ENCODE measurements at regions of chr15 and their contacts with region 1.

Region 1: GRCh38 chr15:57440799-57441198 is 64.5 kb downstream of the CGNL1 start:
- DNase-seq: no peak
- ATAC-seq: no peak
- H3K4me3 ChIP-seq: no peak overlapping the region
- H3K27ac ChIP-seq: no peak overlapping the region
- H3K4me1 ChIP-seq: no peaks in the 10 kb centered on the region
- H3K27me3 ChIP-seq: no peaks in the 10 kb centered on the region; the same call in 1 of the 2 replicates
- CTCF ChIP-seq: no peak

Region 2: DNA sequence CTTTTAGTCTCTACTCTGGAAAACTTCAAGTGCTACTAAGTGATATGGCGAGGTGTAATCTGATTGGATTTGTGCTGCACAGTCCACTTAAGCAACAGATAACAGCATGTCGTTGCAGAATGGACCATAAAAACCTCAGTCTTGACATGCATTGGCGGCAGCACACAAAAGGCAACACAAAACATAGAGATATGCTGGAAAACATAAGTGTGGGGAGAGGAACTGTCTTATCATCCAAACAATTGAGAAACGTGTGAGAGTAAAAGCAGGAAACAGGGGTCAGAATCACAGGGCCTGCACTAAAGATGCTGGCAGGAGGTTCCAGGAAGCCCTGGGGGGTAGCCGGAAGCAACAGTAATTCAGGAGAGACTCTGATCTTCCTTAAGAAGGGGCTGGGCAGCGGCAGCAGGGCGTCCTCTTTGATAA is 17.6 kb after region 1 on chr15:
- CTCF ChIA-PET with region 1: no interaction called
- POLR2A ChIA-PET with region 1: interaction called, 16 read pairs
- in situ Hi-C with region 1: no loop called
- intact Hi-C with region 1: no loop called
- DNase-seq: no peak
- ATAC-seq: no peak
- H3K4me3 ChIP-seq: no peak overlapping the region
- H3K27ac ChIP-seq: no peak overlapping the region
- H3K4me1 ChIP-seq: no peaks in the 10 kb centered on the region
- H3K27me3 ChIP-seq: no peaks in the 10 kb centered on the region
- CTCF ChIP-seq: no peak